ENCODE measurements at regions of chr11 and their contacts with region 1.

Region 1: DNA sequence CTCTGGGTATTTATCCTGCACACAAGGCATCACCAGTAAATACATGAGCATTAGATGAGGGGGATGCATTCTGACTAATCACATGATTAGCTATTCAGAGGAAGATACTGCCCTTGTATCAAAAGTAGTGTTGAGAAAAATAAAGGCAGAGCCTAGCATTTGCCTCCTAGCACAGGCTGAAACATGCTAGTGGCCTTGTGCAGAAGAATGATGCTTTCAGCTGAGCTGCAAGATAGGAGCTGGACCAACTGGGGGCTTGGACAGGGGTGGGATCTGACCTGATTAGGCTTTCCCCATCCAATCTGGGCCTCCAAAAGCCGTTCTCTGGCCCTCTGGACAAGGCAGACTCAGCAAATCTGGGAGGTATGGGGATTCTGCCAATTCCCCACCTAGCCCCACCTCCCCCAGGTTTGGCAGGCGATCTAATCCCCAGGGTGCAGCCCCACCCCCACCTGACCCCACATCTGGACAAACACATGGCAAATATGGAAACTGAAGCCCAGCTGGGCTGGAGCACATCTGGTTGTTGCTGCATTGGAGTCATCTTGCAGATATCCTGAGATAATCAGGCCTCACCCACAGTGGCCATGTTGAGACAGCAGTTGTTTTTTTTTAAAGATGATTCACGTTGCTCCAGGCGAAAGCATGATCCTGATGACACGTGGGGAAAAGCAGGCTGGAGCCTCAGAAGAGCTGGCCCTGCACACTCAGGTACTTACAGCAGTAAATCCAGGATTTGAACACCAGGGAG is 4.4 kb upstream of the MISFA start:
- DNase-seq: no peak
- ATAC-seq: no peak
- H3K4me3 ChIP-seq: no peak overlapping the region
- H3K4me3 Mint-ChIP-seq: no peak overlapping the region
- H3K27ac ChIP-seq: no peak overlapping the region
- H3K27ac Mint-ChIP-seq: no peak overlapping the region
- H3K4me1 ChIP-seq: peaks cover 0 to 2% of the 10 kb centered on the region in 2 experiments
- H3K4me1 Mint-ChIP-seq: peaks cover 0 to 10% (median 3%) of the 10 kb centered on the region in 3 donors
- H3K27me3 ChIP-seq: no peaks in the 10 kb centered on the region
- H3K27me3 Mint-ChIP-seq: no peaks in the 10 kb centered on the region

Region 2: GRCh38 chr11:17449158-17449557 is 1146.0 kb before region 1 on chr11:
- CTCF ChIA-PET with region 1: no interaction called
- POLR2A ChIA-PET with region 1: no interaction called
- DNase-seq: no peak
- ATAC-seq: no peak
- H3K4me3 ChIP-seq: no peak overlapping the region
- H3K4me3 Mint-ChIP-seq: no peak overlapping the region
- H3K27ac ChIP-seq: no peak overlapping the region
- H3K27ac Mint-ChIP-seq: no peak overlapping the region
- H3K4me1 ChIP-seq: no peaks in the 10 kb centered on the region
- H3K4me1 Mint-ChIP-seq: no peaks in the 10 kb centered on the region
- H3K27me3 ChIP-seq: peaks cover 0 to 11% of the 10 kb centered on the region in 2 experiments
- H3K27me3 Mint-ChIP-seq: peaks cover 2 to 4% of the 10 kb centered on the region in 2 donors

Region 3: DNA sequence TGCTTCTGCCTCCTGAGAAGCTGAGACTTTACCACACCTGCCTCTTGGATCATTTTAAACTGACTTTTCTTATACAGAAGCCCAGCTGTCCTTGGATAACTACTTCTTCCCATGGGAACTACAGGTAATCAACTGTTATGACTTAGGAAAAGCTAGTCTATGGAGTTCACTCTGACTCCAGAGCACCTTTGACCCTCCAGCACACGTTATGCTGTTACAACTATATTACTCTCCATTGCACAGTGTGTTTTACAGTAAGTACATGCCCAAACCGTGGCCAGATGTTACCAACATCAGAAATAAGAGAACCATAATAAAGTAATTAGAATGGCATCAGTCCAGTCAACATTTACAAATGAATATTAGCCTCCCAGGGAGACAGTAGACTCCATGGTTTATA is 47.2 kb before region 1 on chr11:
- CTCF ChIA-PET with region 1: no interaction called
- POLR2A ChIA-PET with region 1: no interaction called
- DNase-seq: no peak
- ATAC-seq: no peak
- H3K4me3 ChIP-seq: no peak overlapping the region
- H3K4me3 Mint-ChIP-seq: no peak overlapping the region
- H3K27ac ChIP-seq: no peak overlapping the region
- H3K27ac Mint-ChIP-seq: no peak overlapping the region
- H3K4me1 ChIP-seq: no peaks in the 10 kb centered on the region
- H3K4me1 Mint-ChIP-seq: no peaks in the 10 kb centered on the region
- H3K27me3 ChIP-seq: no peaks in the 10 kb centered on the region
- H3K27me3 Mint-ChIP-seq: no peaks in the 10 kb centered on the region

Region 4: GRCh38 chr11:18580113-18580766 is 14.9 kb before region 1 on chr11:
- CTCF ChIA-PET with region 1: no interaction called
- POLR2A ChIA-PET with region 1: interaction called, 6 to 10 read pairs
- DNase-seq: no peak
- ATAC-seq: no peak
- H3K4me3 ChIP-seq: no peak overlapping the region
- H3K4me3 Mint-ChIP-seq: no peak overlapping the region
- H3K27ac ChIP-seq: no peak overlapping the region
- H3K27ac Mint-ChIP-seq: no peak overlapping the region
- H3K4me1 ChIP-seq: no peaks in the 10 kb centered on the region
- H3K4me1 Mint-ChIP-seq: peaks cover 8 to 22% (median 10%) of the 10 kb centered on the region in 3 donors
- H3K27me3 ChIP-seq: no peaks in the 10 kb centered on the region
- H3K27me3 Mint-ChIP-seq: no peaks in the 10 kb centered on the region